IMR-90 (cell line): ENCODE measurements at regions of chr11 and their contacts with region 1.

Region 1: GRCh38 chr11:6544921-6545850 is 48.1 kb downstream of the DNHD1 start:
- DNase-seq: peak; percentile 51
- ATAC-seq: peak; percentile 63
- H3K4me3 ChIP-seq: no peak overlapping the region
- H3K27ac ChIP-seq: no peak overlapping the region
- H3K4me1 ChIP-seq: no peaks in the 10 kb centered on the region
- H3K27me3 ChIP-seq: no peaks in the 10 kb centered on the region
- CTCF ChIP-seq: no peak
- POLR2A ChIP-seq: no peak
- RAD21 ChIP-seq: no peak

Region 2: DNA sequence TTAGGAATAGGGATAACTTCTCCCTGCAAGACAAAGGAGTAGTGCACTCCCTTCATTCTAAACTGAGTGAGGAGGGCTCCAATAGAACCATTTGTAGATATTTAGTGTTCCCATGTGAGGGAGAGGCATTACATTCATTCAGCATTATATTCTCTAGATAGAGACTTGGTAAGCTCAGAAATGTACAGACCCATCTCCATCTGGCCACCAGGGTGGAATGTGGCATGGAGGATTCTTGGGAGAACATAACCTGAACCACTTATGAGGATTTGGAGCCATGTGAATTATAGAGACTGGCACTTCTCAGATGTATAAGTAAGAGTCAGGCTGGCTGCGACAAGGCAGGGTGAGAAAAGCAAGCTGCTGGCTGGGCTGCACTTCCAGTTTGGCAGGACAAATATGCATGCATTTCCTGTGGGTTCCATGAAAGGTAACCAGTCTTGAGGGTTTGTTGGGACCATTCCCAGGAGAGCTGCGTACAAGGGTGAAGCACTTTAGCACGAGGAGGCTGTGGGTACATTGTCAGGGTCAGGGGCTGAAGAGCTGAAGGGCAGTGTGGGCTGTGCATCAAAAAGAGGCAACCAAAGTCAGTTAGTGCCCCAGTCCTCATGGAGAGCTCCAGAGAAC is 49.1 kb after region 1 on chr11:
- CTCF ChIA-PET with region 1: no interaction called
- POLR2A ChIA-PET with region 1: no interaction called
- dilution Hi-C with region 1: no loop called
- in situ Hi-C with region 1: no loop called
- intact Hi-C with region 1: loop called (anchors 5 kb)
- DNase-seq: no peak
- ATAC-seq: no peak
- H3K4me3 ChIP-seq: no peak overlapping the region
- H3K27ac ChIP-seq: no peak overlapping the region
- H3K4me1 ChIP-seq: no peaks in the 10 kb centered on the region
- H3K27me3 ChIP-seq: no peaks in the 10 kb centered on the region
- CTCF ChIP-seq: no peak
- POLR2A ChIP-seq: no peak
- RAD21 ChIP-seq: no peak